ENCODE measurements at regions of chr12 and their contacts with region 1.

Region 1: GRCh38 chr12:88388566-88389540 is 191.4 kb downstream of the KITLG start:
- DNase-seq: no peak
- H3K4me3 ChIP-seq: no peak overlapping the region
- H3K27ac ChIP-seq: no peak overlapping the region
- H3K4me1 ChIP-seq: peaks cover 12% of the 10 kb centered on the region
- H3K27me3 ChIP-seq: no peaks in the 10 kb centered on the region
- CTCF ChIP-seq: no peak
- POLR2A ChIP-seq: no peak

Region 2: DNA sequence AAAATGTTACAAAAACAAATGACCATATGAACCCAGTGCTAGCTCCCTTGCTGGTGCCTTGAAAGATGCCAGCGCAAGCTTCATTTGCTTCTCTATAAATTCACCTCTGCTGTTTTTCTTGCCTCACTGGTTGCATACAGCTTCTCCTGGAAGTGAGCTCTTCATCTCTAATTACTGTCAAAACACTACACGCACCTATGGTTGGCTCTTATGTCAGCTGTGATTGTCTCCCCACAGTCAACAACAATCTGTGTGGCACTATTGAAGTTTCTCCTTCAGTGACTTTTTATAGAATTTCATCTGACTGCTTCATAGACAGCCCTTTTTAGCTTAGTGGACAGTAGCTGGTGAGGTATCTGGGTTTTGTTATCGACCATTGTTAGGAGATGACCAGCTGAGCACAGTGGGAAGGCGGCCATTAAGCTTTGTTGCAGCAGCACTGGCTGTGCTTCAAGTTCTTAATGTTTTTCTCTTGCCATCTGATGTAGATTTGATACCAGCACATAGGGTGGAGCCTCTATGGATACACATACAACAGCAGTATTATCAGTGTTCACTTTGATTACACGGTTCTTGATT is 59.6 kb after region 1 on chr12:
- intact Hi-C with region 1: no loop called
- DNase-seq: no peak
- H3K4me3 ChIP-seq: no peak overlapping the region
- H3K27ac ChIP-seq: no peak overlapping the region
- H3K4me1 ChIP-seq: no peaks in the 10 kb centered on the region
- H3K27me3 ChIP-seq: no peaks in the 10 kb centered on the region
- CTCF ChIP-seq: no peak
- POLR2A ChIP-seq: no peak

Region 3: GRCh38 chr12:89663577-89664357 is 1274.9 kb after region 1 on chr12:
- intact Hi-C with region 1: loop called (anchors 5 kb)
- DNase-seq: no peak
- H3K4me3 ChIP-seq: no peak overlapping the region
- H3K27ac ChIP-seq: no peak overlapping the region
- H3K4me1 ChIP-seq: peaks cover 26% of the 10 kb centered on the region
- H3K27me3 ChIP-seq: no peaks in the 10 kb centered on the region
- CTCF ChIP-seq: no peak
- POLR2A ChIP-seq: no peak